BJ (cell line): ENCODE measurements at regions of chr7 and their contacts with region 1.

Region 1: DNA sequence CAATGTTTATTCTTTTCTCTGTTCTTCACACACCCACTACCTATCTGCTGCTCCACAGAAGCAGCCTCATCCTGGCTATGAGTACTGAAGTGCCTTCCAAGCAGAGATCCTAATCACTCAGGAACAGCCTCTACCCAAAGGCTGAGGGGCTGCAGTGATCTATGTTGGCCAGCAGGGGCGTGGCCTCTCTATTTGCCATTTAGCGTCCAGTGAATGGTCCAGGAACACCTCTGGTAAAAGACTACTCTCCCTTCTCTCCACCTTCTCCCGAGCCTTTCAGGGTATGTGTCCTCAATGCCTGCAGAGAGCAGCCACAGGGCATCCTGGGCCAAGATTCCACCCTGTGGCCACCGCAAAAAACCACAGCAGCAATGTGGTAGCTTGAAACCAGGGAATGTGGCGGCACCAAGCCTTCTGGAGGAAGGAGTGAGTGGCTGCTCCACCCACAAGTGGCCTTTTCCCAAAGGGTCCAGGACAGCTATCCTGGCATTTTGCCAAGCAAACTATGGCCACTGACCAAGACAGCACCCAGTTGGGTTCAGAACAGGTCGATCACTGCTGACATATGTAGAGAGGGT is 70.9 kb downstream of the SYPL1 start:
- DNase-seq: no peak
- H3K4me3 ChIP-seq: no peak overlapping the region
- H3K27me3 ChIP-seq: peaks cover 6% of the 10 kb centered on the region
- CTCF ChIP-seq: peak; percentile 62

Region 2: DNA sequence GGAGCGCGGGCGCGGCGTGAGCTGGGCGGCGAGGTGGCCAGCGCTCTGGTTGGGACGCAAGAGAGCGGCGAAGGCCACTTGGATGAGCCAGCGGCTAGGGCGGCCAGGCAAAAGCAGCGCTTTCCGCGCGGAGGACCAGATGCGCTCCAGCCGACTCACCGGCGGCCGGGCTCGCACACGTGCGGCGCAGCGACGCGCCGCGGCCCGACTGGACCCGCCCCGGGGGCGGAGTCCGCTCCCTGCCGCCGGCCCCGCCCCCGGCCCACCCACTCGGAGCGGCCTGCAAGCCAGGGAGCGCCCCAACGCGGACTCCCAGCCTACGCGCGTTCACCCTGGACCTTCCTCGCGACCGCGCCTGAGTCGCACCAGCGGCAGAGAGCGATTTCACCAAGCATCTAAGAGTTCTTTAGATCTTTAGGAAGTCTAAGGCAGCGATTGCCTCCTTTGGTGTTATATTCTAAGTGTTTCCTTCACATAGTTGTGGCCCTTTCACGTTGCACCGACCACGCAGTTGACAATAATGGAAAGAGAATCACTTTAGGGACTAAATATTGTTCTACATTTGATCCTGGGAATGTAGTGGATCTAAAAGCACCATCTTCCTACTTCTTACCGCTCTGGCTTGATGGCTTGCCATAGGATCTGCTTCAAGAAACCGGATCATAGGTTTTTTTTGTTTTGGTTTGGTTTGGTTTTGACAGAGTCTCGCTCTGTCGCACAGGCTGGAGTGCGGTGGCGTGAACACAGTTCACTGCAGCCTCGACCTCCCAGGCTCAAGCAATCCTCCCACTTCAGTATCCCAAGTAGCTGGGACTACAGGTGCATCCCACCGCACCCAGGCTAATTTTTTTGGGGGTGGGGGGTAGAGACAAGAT is 518.9 kb before region 1 on chr7 and contains the start of gene PUS7:
- CTCF ChIA-PET with region 1: no interaction called
- POLR2A ChIA-PET with region 1: no interaction called
- DNase-seq: peak; percentile 53
- H3K4me3 ChIP-seq: peak within 1 kb of the TSS; percentile 53
- H3K27me3 ChIP-seq: no peaks in the 10 kb centered on the region
- CTCF ChIP-seq: no peak
- polyA plus RNA-seq, gene PUS7: 5.2 and 9.5 TPM in 2 replicates

Region 3: DNA sequence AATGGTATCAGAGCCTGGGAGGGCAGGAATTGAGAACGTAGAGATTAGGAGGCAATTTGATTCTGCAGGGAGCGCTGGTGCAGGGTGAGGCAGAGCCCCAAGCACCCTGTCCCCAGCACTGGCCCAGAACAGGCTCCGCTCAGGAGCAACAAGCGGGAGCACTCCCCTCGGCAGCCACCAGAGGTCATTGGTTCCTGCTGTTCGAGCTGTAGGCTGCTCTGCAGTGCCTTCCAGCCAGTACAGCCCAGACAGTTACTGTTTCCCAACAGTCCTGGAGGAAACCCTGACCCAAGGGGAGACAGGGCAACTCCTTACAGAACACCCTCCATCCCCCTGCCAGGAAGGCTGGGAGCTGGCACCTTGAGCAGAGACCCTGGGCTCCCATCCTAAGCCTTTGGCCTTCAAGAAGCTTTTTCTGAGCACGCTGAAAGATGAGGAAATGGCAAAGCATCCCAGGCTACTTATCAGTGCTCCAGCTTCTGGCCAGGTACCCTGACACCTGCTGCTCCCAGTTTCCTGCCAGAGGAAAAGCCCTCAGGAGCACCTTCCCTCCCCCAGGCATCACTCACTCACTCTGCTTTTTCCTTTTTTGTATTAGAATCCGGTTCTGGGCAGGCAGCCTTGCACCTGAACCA is 388.8 kb before region 1 on chr7:
- CTCF ChIA-PET with region 1: interaction called, 23 read pairs
- POLR2A ChIA-PET with region 1: no interaction called
- DNase-seq: no peak
- H3K4me3 ChIP-seq: no peak overlapping the region
- H3K27me3 ChIP-seq: no peaks in the 10 kb centered on the region
- CTCF ChIP-seq: peak; percentile 96

Region 4: GRCh38 chr7:105934572-105935185 is 106.5 kb before region 1 on chr7:
- CTCF ChIA-PET with region 1: interaction called, 18 read pairs
- POLR2A ChIA-PET with region 1: no interaction called
- DNase-seq: no peak
- H3K4me3 ChIP-seq: no peak overlapping the region
- H3K27me3 ChIP-seq: no peaks in the 10 kb centered on the region
- CTCF ChIP-seq: peak; percentile 33; the same call in 1 of the 2 replicates

Region 5: GRCh38 chr7:106029944-106030343 is 11.3 kb before region 1 on chr7:
- CTCF ChIA-PET with region 1: interaction called, 38 read pairs
- POLR2A ChIA-PET with region 1: no interaction called
- DNase-seq: no peak
- H3K4me3 ChIP-seq: no peak overlapping the region
- H3K27me3 ChIP-seq: no peaks in the 10 kb centered on the region
- CTCF ChIP-seq: no peak

Region 6: DNA sequence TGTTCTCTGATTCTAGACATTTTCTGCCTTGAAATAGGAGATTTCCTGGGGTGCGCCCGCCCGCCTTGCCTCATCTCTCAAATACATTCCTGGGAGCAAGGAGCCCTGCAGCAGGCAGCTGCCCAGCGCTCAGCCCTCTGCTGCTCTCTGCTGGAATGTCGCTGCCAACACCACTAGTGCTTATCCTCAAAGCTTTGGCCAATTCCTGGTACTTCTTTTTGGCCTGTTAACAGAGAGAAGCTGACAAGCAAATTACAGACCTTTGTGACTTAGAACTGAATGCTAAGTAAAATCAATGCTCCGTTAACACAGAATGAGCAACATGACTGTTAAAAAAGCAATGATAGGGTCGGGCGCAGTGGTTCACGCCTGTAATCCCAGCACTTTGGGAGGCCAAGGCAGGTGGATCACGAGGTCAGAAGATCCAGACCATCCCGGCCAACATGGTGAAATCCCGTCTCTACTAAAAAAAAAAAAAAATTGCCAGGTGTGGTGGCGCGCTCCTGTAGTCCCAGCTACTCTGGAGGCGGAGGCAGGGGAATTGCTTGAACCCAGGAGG is 112.7 kb after region 1 on chr7:
- CTCF ChIA-PET with region 1: interaction called, 24 read pairs
- POLR2A ChIA-PET with region 1: no interaction called
- DNase-seq: peak; percentile 21
- H3K4me3 ChIP-seq: no peak overlapping the region
- H3K27me3 ChIP-seq: peaks cover 7% of the 10 kb centered on the region
- CTCF ChIP-seq: peak; percentile 98